Uterus (tissue), 4 donors: ENCODE measurements at regions of chr5 and their contacts with region 1.

Region 1: DNA sequence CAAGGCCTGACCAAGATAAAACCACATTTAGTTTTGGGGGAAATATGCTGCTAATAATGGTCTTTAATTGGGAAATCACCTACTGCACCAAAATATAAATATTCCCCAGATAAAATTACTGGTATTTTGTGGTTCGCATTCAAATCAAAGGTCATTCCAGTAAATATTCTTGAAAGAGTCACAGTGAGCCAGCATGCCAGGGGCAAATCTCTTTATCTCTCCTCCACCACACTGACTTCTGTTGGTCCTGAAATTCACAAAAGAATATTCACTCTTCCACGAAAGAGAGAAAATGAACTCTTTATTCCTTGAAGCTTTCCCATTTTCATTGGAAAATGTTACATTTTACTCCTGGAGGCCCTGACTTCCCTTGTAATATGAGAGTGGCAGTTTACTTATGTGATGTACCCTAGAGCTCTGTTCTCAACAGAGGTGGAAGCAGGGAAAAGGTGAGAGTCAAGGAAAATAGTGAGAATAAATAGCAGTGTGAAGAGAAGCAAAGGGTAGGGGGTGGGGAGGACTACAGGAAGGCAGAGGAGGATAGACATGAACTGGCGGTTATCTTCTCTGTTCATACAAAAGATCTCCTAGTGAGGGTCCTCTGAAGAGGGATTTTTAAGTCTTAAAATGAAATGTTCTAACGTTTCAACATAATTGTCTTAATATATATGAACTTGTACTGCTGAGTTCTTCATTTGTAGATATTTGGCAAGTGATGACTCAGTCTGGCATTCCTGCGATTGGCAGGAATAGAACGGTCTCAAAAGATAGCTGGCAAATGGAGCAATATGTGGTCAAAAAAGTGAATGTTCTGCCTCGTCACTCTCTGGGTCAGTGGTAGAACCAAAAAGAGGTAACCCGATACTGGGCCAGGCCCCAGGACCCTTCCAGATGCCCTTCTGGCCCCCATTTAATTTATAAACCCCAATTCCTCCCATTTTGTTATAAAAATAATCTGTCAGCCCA is 39.5 kb downstream of the ZNF366 start:
- DNase-seq: no peak
- H3K4me3 ChIP-seq: no peak overlapping the region
- H3K27ac ChIP-seq: no peak overlapping the region
- H3K4me1 ChIP-seq: peaks cover 0 to 3% of the 10 kb centered on the region in 2 donors
- H3K27me3 ChIP-seq: no peaks in the 10 kb centered on the region
- CTCF ChIP-seq: no peak
- POLR2A ChIP-seq: no peak

Region 2: GRCh38 chr5:72412283-72413055 is 55.2 kb before region 1 on chr5:
- intact Hi-C with region 1: loop called (anchors 2 kb)
- DNase-seq: no peak
- H3K4me3 ChIP-seq: no peak overlapping the region
- H3K27ac ChIP-seq: no peak overlapping the region
- H3K4me1 ChIP-seq: no peaks in the 10 kb centered on the region
- H3K27me3 ChIP-seq: no peaks in the 10 kb centered on the region
- CTCF ChIP-seq: no peak
- POLR2A ChIP-seq: no peak